ENCODE measurements at regions of chr19 and their contacts with region 1.

Region 1: GRCh38 chr19:2475702-2476450 is at the start of gene GADD45B:
- DNase-seq: peak; percentile 98
- H3K4me3 ChIP-seq: peak within 1 kb of the TSS; percentile 81
- H3K27ac ChIP-seq: peak within 1 kb of the TSS; percentile 65
- H3K4me1 ChIP-seq: peaks cover 33% of the 10 kb centered on the region
- H3K27me3 ChIP-seq: no peaks in the 10 kb centered on the region
- CTCF ChIP-seq: no peak
- total RNA-seq, gene GADD45B: 12.3 and 16.4 TPM in 2 replicates

Region 2: GRCh38 chr19:2168619-2169424 is 307.1 kb before region 1 on chr19:
- CTCF ChIA-PET with region 1: no interaction called
- POLR2A ChIA-PET with region 1: no interaction called
- intact Hi-C with region 1: no loop called
- DNase-seq: no peak
- H3K4me3 ChIP-seq: no peak overlapping the region
- H3K27ac ChIP-seq: peak overlapping the region; percentile 11
- H3K4me1 ChIP-seq: peaks cover 38% of the 10 kb centered on the region
- H3K27me3 ChIP-seq: no peaks in the 10 kb centered on the region
- CTCF ChIP-seq: no peak

Region 3: GRCh38 chr19:2503521-2504109 is 27.7 kb after region 1 on chr19:
- CTCF ChIA-PET with region 1: no interaction called
- POLR2A ChIA-PET with region 1: interaction called, 10 read pairs
- intact Hi-C with region 1: no loop called
- DNase-seq: no peak
- H3K4me3 ChIP-seq: no peak overlapping the region
- H3K27ac ChIP-seq: peak overlapping the region; percentile 32
- H3K4me1 ChIP-seq: peaks cover 8% of the 10 kb centered on the region
- H3K27me3 ChIP-seq: no peaks in the 10 kb centered on the region
- CTCF ChIP-seq: no peak

Region 4: DNA sequence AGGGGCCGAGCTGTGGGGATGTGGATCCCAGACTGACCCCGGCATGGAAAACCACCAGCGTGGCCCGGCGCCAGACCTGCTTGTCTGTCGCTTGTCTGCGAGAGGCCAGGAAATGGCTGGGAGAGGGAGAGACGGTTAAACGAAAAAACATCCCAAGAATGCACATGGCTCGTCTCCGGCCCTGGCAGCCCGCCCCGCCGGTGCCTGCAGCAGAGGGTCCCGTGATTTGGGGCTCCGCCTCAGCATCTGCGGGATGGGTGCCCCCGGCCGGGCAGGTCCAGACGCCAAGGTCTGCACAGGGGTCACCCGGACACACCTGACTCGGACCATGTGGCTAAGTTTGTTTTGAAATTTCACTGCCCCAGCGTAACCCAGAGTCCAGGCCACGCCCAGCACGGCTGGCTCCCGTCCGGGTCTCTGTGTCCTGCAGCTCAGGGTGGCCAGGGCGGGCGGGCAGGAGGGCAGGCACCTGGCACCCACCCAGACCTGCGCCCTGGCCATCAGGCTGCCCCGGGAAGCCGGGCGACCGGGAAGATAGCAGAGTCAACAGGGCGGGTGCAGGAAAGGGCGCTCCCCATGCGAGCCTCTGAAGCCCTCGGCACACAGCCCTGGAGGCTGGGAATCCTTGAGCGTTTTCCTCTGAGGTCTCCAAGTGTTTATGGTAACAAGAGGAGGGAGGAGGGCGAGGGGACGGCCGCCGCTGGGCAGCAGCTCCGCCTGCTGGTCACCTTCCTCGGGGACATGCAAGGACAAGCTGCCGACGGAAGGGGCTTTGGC is 103.2 kb after region 1 on chr19:
- CTCF ChIA-PET with region 1: interaction called, 3 read pairs
- POLR2A ChIA-PET with region 1: interaction called, 16 read pairs
- intact Hi-C with region 1: loop called (anchors 1 kb)
- DNase-seq: peak; percentile 87
- H3K4me3 ChIP-seq: peak overlapping the region; percentile 49
- H3K27ac ChIP-seq: no peak overlapping the region
- H3K4me1 ChIP-seq: peaks cover 14% of the 10 kb centered on the region
- H3K27me3 ChIP-seq: no peaks in the 10 kb centered on the region
- CTCF ChIP-seq: peak; percentile 88

Region 5: GRCh38 chr19:2600914-2601870 is 125.3 kb after region 1 on chr19:
- CTCF ChIA-PET with region 1: interaction called, 8 read pairs
- POLR2A ChIA-PET with region 1: interaction called, 10 read pairs
- intact Hi-C with region 1: no loop called
- DNase-seq: no peak
- H3K4me3 ChIP-seq: no peak overlapping the region
- H3K27ac ChIP-seq: no peak overlapping the region
- H3K4me1 ChIP-seq: peaks cover 22% of the 10 kb centered on the region
- H3K27me3 ChIP-seq: no peaks in the 10 kb centered on the region
- CTCF ChIP-seq: no peak

Measured in A673 (cell line).